Caco-2 (cell line): ENCODE measurements at regions of chr17 and their contacts with region 1.

Region 1: GRCh38 chr17:37710344-37710886 is 34.4 kb downstream of the HNF1B start:
- DNase-seq: peak; percentile 97 to 99
- H3K4me3 ChIP-seq: no peak overlapping the region
- H3K4me3 Mint-ChIP-seq: peak overlapping the region; percentile 62
- H3K27ac Mint-ChIP-seq: peak overlapping the region; percentile 98
- H3K4me1 ChIP-seq: peaks cover 42% of the 10 kb centered on the region
- H3K4me1 Mint-ChIP-seq: peaks cover 50% of the 10 kb centered on the region
- H3K27me3 ChIP-seq: no peaks in the 10 kb centered on the region
- H3K27me3 Mint-ChIP-seq: no peaks in the 10 kb centered on the region
- CTCF ChIP-seq: peak; percentile 15 to 17

Region 2: DNA sequence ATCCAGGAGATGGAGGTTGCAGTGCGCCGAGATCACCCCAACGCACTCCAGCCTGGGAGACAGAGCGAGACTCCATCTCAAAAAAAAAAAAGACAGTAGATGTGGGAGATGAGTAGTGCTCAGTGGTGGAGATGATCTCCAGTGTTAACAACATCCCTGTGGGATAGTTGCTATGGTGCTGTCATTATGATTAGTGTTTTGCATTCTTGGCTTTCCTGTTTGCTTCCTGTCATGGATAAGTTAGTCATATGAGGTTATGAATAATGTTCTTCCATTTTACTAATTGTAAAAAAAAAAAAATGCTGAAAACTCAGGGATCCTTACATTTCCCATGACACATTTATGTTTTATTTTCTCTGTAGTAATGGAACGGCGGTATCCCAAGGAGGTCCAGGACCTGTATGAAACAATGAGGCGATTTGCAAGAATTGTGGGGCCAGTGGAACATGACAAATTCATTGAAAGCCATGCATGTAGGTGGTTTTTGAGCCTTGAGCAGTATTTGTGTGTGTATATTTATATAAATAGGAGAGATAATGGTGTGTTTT is 245.3 kb before region 1 on chr17:
- CTCF ChIA-PET with region 1: no interaction called
- POLR2A ChIA-PET with region 1: no interaction called
- intact Hi-C with region 1: no loop called
- DNase-seq: no peak
- H3K4me3 ChIP-seq: no peak overlapping the region
- H3K4me3 Mint-ChIP-seq: no peak overlapping the region
- H3K27ac Mint-ChIP-seq: no peak overlapping the region
- H3K4me1 ChIP-seq: no peaks in the 10 kb centered on the region
- H3K4me1 Mint-ChIP-seq: no peaks in the 10 kb centered on the region
- H3K27me3 ChIP-seq: no peaks in the 10 kb centered on the region
- H3K27me3 Mint-ChIP-seq: no peaks in the 10 kb centered on the region
- CTCF ChIP-seq: no peak

Region 3: GRCh38 chr17:37650419-37651003 is 59.9 kb before region 1 on chr17:
- CTCF ChIA-PET with region 1: no interaction called
- POLR2A ChIA-PET with region 1: interaction called, 5 read pairs
- intact Hi-C with region 1: loop called (anchors 5 kb)
- DNase-seq: peak; percentile 64 to 66
- H3K4me3 ChIP-seq: no peak overlapping the region
- H3K4me3 Mint-ChIP-seq: no peak overlapping the region
- H3K27ac Mint-ChIP-seq: no peak overlapping the region
- H3K4me1 ChIP-seq: peaks cover 13% of the 10 kb centered on the region
- H3K4me1 Mint-ChIP-seq: peaks cover 14% of the 10 kb centered on the region
- H3K27me3 ChIP-seq: no peaks in the 10 kb centered on the region
- H3K27me3 Mint-ChIP-seq: no peaks in the 10 kb centered on the region
- CTCF ChIP-seq: peak; percentile 70 to 71

Region 4: DNA sequence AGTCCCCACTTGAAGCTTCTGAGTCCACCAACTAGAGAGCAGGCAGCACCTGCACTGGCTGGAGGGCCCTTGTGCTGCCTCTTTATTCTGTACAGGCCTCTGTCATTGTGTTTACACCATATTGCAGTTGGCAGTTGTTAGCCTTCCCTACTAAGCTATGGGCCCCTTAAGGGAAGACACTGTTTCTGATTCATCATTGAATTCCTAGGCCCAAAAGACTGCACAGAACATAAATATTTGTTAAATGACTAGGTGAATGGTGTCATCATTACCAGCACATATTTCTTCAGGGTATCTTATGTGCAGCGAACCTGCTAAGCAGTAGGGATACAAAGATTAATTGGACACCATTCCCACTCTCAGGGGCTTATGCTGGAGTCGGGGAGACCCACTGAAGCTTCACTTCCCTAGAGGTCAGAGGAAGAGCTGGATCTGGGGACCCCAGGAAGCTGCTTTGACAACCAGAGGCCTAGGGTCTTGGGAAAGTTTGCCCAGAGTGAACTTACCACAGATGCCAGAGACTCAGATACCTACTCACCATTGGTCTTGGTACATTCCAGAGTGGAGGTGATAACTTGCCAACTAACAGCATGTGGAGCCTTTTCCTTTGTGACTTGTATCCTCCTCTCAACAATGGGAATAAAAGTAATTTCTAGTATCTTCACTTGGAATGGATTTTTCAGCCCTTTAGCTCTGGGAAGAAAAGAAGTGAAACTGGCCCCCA is 38.4 kb before region 1 on chr17:
- CTCF ChIA-PET with region 1: interaction called, 4 read pairs
- POLR2A ChIA-PET with region 1: interaction called, 5 read pairs
- intact Hi-C with region 1: loop called (anchors 2 kb)
- DNase-seq: peak in 1 of 2 experiments; percentile 67
- H3K4me3 ChIP-seq: no peak overlapping the region
- H3K4me3 Mint-ChIP-seq: no peak overlapping the region
- H3K27ac Mint-ChIP-seq: peak overlapping the region; percentile 96
- H3K4me1 ChIP-seq: peaks cover 76% of the 10 kb centered on the region
- H3K4me1 Mint-ChIP-seq: peaks cover 46% of the 10 kb centered on the region
- H3K27me3 ChIP-seq: no peaks in the 10 kb centered on the region
- H3K27me3 Mint-ChIP-seq: no peaks in the 10 kb centered on the region
- CTCF ChIP-seq: no peak

Region 5: DNA sequence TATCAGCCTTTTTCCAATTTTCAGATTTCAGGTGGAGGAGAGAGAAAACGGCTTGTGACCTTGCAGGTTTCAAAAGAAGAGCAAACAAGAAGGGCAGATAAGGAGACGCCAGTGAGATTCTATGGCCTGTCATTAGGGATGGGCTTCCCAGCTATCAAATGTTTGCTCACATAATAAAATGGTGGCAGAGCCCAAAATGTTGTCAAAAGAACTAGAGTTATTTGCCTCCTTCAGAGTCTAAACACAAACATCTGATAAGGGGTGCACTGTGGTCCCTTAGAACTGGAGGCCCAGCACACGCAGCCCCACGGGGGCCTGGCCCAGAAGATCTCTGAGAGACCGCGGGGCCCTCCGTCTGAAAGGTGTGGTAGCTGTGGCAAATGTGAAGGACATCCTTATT is 21.1 kb before region 1 on chr17:
- CTCF ChIA-PET with region 1: interaction called, 3 read pairs
- POLR2A ChIA-PET with region 1: interaction called, 5 read pairs
- intact Hi-C with region 1: loop called (anchors 1 kb)
- DNase-seq: peak; percentile 84 to 90
- H3K4me3 ChIP-seq: no peak overlapping the region
- H3K4me3 Mint-ChIP-seq: peak overlapping the region; percentile 47
- H3K27ac Mint-ChIP-seq: peak overlapping the region; percentile 75
- H3K4me1 ChIP-seq: peaks cover 71% of the 10 kb centered on the region
- H3K4me1 Mint-ChIP-seq: peaks cover 57% of the 10 kb centered on the region
- H3K27me3 ChIP-seq: no peaks in the 10 kb centered on the region
- H3K27me3 Mint-ChIP-seq: no peaks in the 10 kb centered on the region
- CTCF ChIP-seq: no peak

Region 6: DNA sequence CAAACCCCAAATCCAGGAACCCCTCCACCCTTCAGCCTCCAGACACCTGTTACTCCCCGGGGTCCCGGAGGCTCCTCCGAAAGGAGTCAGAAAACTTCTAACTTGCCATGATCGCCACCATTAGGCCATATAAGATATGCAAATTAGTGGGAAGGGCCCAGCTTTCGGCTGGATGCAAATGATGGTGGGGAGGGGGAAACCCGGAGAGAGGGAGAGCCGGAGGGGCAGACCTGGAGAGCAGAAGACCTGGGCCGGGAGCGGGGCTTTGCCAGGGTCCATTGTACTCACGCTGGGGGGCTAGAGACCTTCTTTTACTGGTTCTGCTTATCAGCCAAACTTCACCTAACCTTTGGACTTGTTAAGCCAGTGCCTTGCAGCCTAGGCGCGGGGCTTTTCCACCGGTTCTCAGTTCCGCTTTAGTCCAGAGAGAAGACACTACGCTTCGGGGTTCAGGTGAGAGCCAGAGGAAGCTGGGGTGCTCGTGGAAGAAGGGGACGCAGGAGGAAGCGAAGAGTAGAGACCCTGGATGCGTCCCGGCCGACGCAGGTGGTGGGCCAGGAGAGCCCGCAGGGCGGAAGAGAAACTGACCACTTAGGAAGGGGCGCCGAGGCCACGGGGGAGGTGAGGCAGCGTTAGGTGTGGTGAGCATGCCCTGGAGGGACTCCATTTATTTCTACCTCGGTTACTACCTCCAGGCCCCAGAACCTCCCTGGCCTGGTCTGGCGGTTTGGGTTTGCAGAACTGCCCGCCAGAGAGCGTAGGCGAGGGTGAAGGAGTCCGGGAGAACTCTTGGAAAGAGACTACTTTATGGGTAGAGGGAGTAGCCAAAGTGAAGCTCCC is 34.8 kb after region 1 on chr17 and contains the start of gene HNF1B:
- CTCF ChIA-PET with region 1: interaction called, 6 read pairs
- POLR2A ChIA-PET with region 1: interaction called, 9 read pairs
- intact Hi-C with region 1: loop called (anchors 1 kb)
- DNase-seq: peak; percentile 87 to 88
- H3K4me3 ChIP-seq: peak within 1 kb of the TSS; percentile 64
- H3K4me3 Mint-ChIP-seq: peak within 1 kb of the TSS; percentile 100
- H3K27ac Mint-ChIP-seq: peak within 1 kb of the TSS; percentile 100
- H3K4me1 ChIP-seq: peaks cover 21% of the 10 kb centered on the region
- H3K4me1 Mint-ChIP-seq: peaks cover 23% of the 10 kb centered on the region
- H3K27me3 ChIP-seq: no peaks in the 10 kb centered on the region
- H3K27me3 Mint-ChIP-seq: no peaks in the 10 kb centered on the region
- CTCF ChIP-seq: peak in 1 of 2 experiments; percentile 17
- total RNA-seq, gene HNF1B: 36.9 TPM in 2 replicates

Region 7: GRCh38 chr17:37844158-37844976 is 134.0 kb after region 1 on chr17:
- CTCF ChIA-PET with region 1: no interaction called
- POLR2A ChIA-PET with region 1: no interaction called
- intact Hi-C with region 1: no loop called
- DNase-seq: peak in 1 of 2 experiments; percentile 34
- H3K4me3 ChIP-seq: no peak overlapping the region
- H3K4me3 Mint-ChIP-seq: no peak overlapping the region
- H3K27ac Mint-ChIP-seq: no peak overlapping the region
- H3K4me1 ChIP-seq: peaks cover 4% of the 10 kb centered on the region
- H3K4me1 Mint-ChIP-seq: peaks cover 16% of the 10 kb centered on the region
- H3K27me3 ChIP-seq: no peaks in the 10 kb centered on the region
- H3K27me3 Mint-ChIP-seq: no peaks in the 10 kb centered on the region
- CTCF ChIP-seq: peak; percentile 6 to 49

Region 8: DNA sequence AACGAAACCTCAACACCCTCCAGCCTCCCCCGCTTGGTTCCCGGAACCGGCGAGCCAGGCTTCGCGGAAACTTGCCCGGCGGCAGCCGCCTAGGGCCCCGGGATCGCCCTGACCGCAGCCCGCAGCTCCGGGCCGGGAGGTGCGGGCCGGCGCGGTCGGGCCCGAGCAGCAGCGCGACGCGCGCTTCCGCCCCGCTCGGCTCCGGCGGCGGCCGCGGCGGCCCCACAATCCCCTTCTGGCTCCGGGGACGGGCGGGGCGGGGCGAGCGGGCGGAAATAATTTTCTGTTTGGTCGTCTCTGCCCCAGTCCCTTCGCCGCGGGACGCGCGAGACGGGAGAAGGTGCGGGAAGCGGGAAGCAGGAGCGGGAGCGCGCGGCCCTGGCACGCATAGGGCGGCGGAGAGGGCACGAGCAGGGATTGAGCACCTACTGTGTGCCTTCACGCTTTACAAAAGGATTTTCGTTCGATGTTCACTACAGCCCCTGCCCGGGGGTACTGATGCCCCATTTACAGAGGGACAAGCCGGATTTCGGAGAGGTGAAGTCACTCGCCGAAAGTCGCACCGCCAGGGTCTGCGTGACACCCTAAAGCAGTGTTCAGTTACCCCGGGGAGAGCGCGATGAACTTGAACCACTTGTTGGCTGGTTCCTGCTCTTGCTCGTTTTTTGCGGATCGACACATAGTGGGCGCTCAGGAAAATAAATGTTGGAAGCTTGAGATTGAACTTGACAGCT is 991.9 kb after region 1 on chr17:
- CTCF ChIA-PET with region 1: no interaction called
- POLR2A ChIA-PET with region 1: no interaction called
- intact Hi-C with region 1: loop called (anchors 10 kb)
- DNase-seq: peak; percentile 89 to 92
- H3K4me3 ChIP-seq: peak overlapping the region; percentile 71
- H3K4me3 Mint-ChIP-seq: peak overlapping the region; percentile 95
- H3K27ac Mint-ChIP-seq: peak overlapping the region; percentile 81
- H3K4me1 ChIP-seq: peaks cover 39% of the 10 kb centered on the region
- H3K4me1 Mint-ChIP-seq: peaks cover 24% of the 10 kb centered on the region
- H3K27me3 ChIP-seq: no peaks in the 10 kb centered on the region
- H3K27me3 Mint-ChIP-seq: no peaks in the 10 kb centered on the region
- CTCF ChIP-seq: no peak